AG04450 (cell line): ENCODE measurements at regions of chr22 and their contacts with region 1.

Region 1: DNA sequence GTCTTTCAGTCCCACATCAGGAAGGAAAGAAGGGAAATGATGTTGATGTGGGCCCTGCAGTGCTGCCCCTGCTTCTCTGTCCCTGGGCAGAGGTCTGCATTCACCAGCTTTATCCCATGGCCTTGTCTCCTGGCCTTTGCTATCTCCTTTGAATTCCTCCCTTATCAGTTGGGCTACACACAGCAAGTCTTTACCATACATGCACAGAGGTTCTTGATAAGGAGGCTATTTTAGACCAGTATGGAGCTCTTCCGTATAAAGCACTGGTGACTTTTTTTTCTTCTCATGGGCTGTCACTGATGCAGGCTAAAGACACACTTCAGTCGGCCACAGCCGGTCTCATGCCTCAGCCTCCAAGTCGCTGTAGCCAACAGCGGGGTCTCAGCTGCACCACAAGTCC is 20.2 kb downstream of the MYO18B start:
- DNase-seq: no peak
- H3K4me3 ChIP-seq: no peak overlapping the region
- H3K27ac ChIP-seq: no peak overlapping the region
- H3K27me3 ChIP-seq: no peaks in the 10 kb centered on the region
- CTCF ChIP-seq: no peak

Region 2: GRCh38 chr22:25623310-25623734 is 138.8 kb before region 1 on chr22:
- CTCF ChIA-PET with region 1: no interaction called
- POLR2A ChIA-PET with region 1: no interaction called
- DNase-seq: no peak
- H3K4me3 ChIP-seq: no peak overlapping the region
- H3K27ac ChIP-seq: no peak overlapping the region
- H3K27me3 ChIP-seq: no peaks in the 10 kb centered on the region
- CTCF ChIP-seq: no peak

Region 3: GRCh38 chr22:25777870-25778269 is 15.7 kb after region 1 on chr22:
- CTCF ChIA-PET with region 1: interaction called, 11 read pairs
- POLR2A ChIA-PET with region 1: no interaction called
- DNase-seq: no peak
- H3K4me3 ChIP-seq: no peak overlapping the region
- H3K27ac ChIP-seq: no peak overlapping the region
- H3K27me3 ChIP-seq: no peaks in the 10 kb centered on the region
- CTCF ChIP-seq: peak; percentile 47; the same call in 1 of the 2 replicates